ENCODE measurements at regions of chr17 and their contacts with region 1.

Region 1: GRCh38 chr17:45277216-45277849 is 15.4 kb upstream of the SPATA32 start:
- DNase-seq: peak; percentile 94 to 95
- H3K4me3 ChIP-seq: no peak overlapping the region
- H3K4me3 Mint-ChIP-seq: peak overlapping the region; percentile 41
- H3K27ac Mint-ChIP-seq: peak overlapping the region; percentile 61
- H3K4me1 ChIP-seq: peaks cover 11% of the 10 kb centered on the region
- H3K4me1 Mint-ChIP-seq: peaks cover 12% of the 10 kb centered on the region
- H3K27me3 ChIP-seq: no peaks in the 10 kb centered on the region
- H3K27me3 Mint-ChIP-seq: no peaks in the 10 kb centered on the region
- CTCF ChIP-seq: peak; percentile 88 to 96

Region 2: DNA sequence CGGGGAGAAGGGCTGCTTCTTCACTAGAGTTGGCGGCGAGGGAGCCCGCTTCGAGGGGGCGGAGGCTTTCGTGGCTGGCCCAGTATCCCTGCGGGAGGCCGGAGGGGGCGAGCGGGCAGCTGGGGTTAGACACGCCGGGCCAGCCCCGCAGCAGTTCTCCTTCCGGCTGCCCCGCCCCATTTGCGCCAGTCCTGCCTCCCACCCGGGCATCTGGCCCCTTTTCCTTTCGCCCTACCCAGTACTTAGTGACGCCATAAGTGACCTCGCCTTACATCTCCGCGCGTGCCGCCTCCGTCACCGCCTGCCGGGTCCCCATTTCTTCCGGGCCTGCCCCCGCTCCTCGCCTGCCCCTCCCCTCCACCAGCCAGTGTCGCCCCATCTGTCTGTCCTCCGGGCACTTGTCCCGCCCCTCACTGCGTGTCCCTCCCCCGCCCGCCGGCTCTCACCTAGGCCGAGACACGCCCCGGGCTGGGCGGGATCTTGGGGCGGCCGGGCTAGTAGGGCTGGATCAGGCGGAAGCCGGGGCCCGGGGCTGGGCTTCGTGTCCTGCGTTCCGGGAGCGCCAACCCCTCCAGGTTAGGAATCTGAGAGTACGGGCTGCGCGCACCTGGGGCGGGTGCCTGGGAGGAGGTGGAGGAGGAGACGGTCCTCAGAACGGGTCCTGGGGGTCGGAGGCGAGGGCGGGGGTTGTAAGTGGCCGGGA is 29.8 kb before region 1 on chr17:
- CTCF ChIA-PET with region 1: interaction called, 10 read pairs
- POLR2A ChIA-PET with region 1: interaction called, 5 read pairs
- intact Hi-C with region 1: no loop called
- DNase-seq: peak; percentile 99
- H3K4me3 ChIP-seq: peak overlapping the region; percentile 63
- H3K4me3 Mint-ChIP-seq: peak overlapping the region; percentile 81
- H3K27ac Mint-ChIP-seq: peak overlapping the region; percentile 92
- H3K4me1 ChIP-seq: peaks cover 11% of the 10 kb centered on the region
- H3K4me1 Mint-ChIP-seq: peaks cover 10% of the 10 kb centered on the region
- H3K27me3 ChIP-seq: no peaks in the 10 kb centered on the region
- H3K27me3 Mint-ChIP-seq: peaks cover 2% of the 10 kb centered on the region
- CTCF ChIP-seq: no peak

Region 3: GRCh38 chr17:45311760-45312476 is 34.6 kb after region 1 on chr17:
- CTCF ChIA-PET with region 1: interaction called, 30 read pairs
- POLR2A ChIA-PET with region 1: interaction called, 5 read pairs
- intact Hi-C with region 1: loop called (anchors 1 kb)
- DNase-seq: peak; percentile 59 to 81
- H3K4me3 ChIP-seq: no peak overlapping the region
- H3K4me3 Mint-ChIP-seq: no peak overlapping the region
- H3K27ac Mint-ChIP-seq: peak overlapping the region; percentile 42
- H3K4me1 ChIP-seq: peaks cover 39% of the 10 kb centered on the region
- H3K4me1 Mint-ChIP-seq: peaks cover 31% of the 10 kb centered on the region
- H3K27me3 ChIP-seq: no peaks in the 10 kb centered on the region
- H3K27me3 Mint-ChIP-seq: no peaks in the 10 kb centered on the region
- CTCF ChIP-seq: no peak

Region 4: DNA sequence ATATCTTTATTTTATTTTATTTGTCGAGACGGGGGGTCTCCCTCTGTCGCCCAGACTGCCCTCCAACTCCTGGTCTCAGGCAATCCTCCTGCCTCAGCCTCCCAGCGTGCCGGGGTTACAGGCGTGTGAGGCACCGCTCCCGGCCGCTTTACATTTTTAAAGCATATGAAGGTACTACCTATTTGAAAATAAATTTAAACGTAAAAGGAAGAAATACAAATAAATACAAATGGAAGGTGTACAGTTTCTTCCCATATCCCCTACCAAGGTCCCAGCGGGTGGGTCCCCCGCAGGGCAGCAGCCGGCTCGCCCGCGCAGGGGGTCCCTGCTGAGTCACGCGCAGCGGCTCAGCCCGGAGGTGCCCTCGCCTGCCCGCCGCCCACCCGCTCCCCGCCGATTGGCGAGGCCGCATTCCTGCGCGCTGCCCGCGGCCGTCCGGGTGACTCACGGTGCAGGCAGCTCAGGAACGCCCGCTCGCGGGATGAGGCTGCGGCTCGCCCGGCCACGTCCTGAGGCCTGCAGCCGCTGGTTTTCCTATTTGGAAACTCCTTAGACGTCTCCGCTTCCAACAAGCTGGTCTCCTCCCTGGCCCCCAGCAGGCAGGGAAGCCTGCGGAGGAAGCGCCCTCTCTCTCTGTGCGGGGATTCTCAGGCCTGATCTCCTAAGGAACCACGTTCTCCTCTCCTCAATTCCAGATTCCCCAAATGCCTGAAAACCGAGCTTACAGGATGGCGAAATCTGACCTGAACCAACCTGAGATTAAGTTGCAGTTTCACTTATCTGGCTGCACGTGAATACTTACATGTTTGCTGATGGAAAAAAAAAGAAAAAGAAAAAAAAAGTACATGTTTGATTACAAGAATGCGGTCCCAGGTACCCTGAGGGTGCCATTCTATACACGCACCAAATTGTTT is 94.3 kb after region 1 on chr17:
- CTCF ChIA-PET with region 1: interaction called, 20 read pairs
- POLR2A ChIA-PET with region 1: interaction called, 8 read pairs
- intact Hi-C with region 1: loop called (anchors 1 kb)
- DNase-seq: peak; percentile 95 to 96
- H3K4me3 ChIP-seq: peak overlapping the region; percentile 35
- H3K4me3 Mint-ChIP-seq: peak overlapping the region; percentile 74
- H3K27ac Mint-ChIP-seq: peak overlapping the region; percentile 96
- H3K4me1 ChIP-seq: peaks cover 39% of the 10 kb centered on the region
- H3K4me1 Mint-ChIP-seq: peaks cover 27% of the 10 kb centered on the region
- H3K27me3 ChIP-seq: no peaks in the 10 kb centered on the region
- H3K27me3 Mint-ChIP-seq: no peaks in the 10 kb centered on the region
- CTCF ChIP-seq: no peak

Measured in Caco-2 (cell line).